ENCODE measurements at regions of chrX and their contacts with region 1.

Region 1: GRCh38 chrX:39907964-39908616 is 189.7 kb downstream of the BCOR start:
- DNase-seq: peak; percentile 28
- ATAC-seq: peak; percentile 93
- H3K4me3 ChIP-seq: no peak overlapping the region
- H3K27ac ChIP-seq: 0 out of 2 replicates have a peak overlapping the region, but pooled peaks have one; percentile 12
- H3K4me1 ChIP-seq: no peaks in the 10 kb centered on the region; the same call in 1 of the 2 replicates
- H3K27me3 ChIP-seq: no peaks in the 10 kb centered on the region
- CTCF ChIP-seq: no peak

Region 2: DNA sequence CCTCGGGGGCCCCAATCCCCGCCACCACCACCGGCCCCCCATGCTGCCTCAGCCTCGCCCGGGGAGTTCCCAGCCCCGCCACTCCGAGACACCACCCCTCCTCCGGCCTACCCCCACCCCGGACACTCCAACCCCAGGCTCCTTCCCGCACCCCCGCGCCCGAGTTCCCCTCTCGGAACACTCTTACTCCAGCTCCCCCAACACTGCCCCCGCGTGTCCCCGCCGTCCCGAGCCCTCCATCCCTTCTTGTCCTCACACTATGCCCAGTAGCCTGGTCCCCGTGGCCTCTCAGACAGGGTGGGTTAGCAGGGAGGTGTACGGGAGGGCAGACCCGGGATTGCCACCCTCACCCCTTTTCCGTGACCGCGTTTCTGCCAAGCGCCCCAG is 86.4 kb before region 1 on chrX:
- CTCF ChIA-PET with region 1: no interaction called
- POLR2A ChIA-PET with region 1: interaction called, 11 read pairs
- in situ Hi-C with region 1: no loop called
- intact Hi-C with region 1: no loop called
- DNase-seq: no peak
- ATAC-seq: no peak
- H3K4me3 ChIP-seq: no peak overlapping the region
- H3K27ac ChIP-seq: no peak overlapping the region
- H3K4me1 ChIP-seq: no peaks in the 10 kb centered on the region
- H3K27me3 ChIP-seq: no peaks in the 10 kb centered on the region
- CTCF ChIP-seq: no peak

Region 3: GRCh38 chrX:39874202-39874816 is 33.8 kb before region 1 on chrX:
- CTCF ChIA-PET with region 1: no interaction called
- POLR2A ChIA-PET with region 1: interaction called, 25 read pairs
- in situ Hi-C with region 1: no loop called
- intact Hi-C with region 1: no loop called
- DNase-seq: no peak
- ATAC-seq: no peak
- H3K4me3 ChIP-seq: no peak overlapping the region
- H3K27ac ChIP-seq: no peak overlapping the region
- H3K4me1 ChIP-seq: no peaks in the 10 kb centered on the region
- H3K27me3 ChIP-seq: no peaks in the 10 kb centered on the region
- CTCF ChIP-seq: no peak

Region 4: GRCh38 chrX:40006106-40007017 is 98.3 kb after region 1 on chrX:
- CTCF ChIA-PET with region 1: no interaction called
- POLR2A ChIA-PET with region 1: no interaction called
- in situ Hi-C with region 1: no loop called
- intact Hi-C with region 1: no loop called
- DNase-seq: no peak
- ATAC-seq: no peak
- H3K4me3 ChIP-seq: no peak overlapping the region
- H3K27ac ChIP-seq: no peak overlapping the region
- H3K4me1 ChIP-seq: no peaks in the 10 kb centered on the region; the same call in none of the 2 replicates
- H3K27me3 ChIP-seq: no peaks in the 10 kb centered on the region
- CTCF ChIP-seq: no peak

Measured in Panc1 (cell line).